ENCODE measurements at regions of chr12 and their contacts with region 1.

Region 1: GRCh38 chr12:79737875-79738718 is 47.3 kb upstream of the PAWR start:
- DNase-seq: no peak
- H3K4me3 ChIP-seq: no peak overlapping the region
- H3K27ac ChIP-seq: no peak overlapping the region
- H3K4me1 ChIP-seq: no peaks in the 10 kb centered on the region
- H3K27me3 ChIP-seq: no peaks in the 10 kb centered on the region
- CTCF ChIP-seq: peak; percentile 39 to 67 (median 40)

Region 2: GRCh38 chr12:79407671-79408622 is 330.1 kb before region 1 on chr12:
- intact Hi-C with region 1: loop called (anchors 2 kb)
- DNase-seq: peak in 1 of 2 donors; percentile 77
- H3K4me3 ChIP-seq: no peak overlapping the region
- H3K27ac ChIP-seq: peak overlapping the region; percentile 63 to 65
- H3K4me1 ChIP-seq: peaks cover 3 to 17% of the 10 kb centered on the region in 2 donors
- H3K27me3 ChIP-seq: no peaks in the 10 kb centered on the region
- CTCF ChIP-seq: peak; percentile 55 to 76 (median 57)

Region 3: DNA sequence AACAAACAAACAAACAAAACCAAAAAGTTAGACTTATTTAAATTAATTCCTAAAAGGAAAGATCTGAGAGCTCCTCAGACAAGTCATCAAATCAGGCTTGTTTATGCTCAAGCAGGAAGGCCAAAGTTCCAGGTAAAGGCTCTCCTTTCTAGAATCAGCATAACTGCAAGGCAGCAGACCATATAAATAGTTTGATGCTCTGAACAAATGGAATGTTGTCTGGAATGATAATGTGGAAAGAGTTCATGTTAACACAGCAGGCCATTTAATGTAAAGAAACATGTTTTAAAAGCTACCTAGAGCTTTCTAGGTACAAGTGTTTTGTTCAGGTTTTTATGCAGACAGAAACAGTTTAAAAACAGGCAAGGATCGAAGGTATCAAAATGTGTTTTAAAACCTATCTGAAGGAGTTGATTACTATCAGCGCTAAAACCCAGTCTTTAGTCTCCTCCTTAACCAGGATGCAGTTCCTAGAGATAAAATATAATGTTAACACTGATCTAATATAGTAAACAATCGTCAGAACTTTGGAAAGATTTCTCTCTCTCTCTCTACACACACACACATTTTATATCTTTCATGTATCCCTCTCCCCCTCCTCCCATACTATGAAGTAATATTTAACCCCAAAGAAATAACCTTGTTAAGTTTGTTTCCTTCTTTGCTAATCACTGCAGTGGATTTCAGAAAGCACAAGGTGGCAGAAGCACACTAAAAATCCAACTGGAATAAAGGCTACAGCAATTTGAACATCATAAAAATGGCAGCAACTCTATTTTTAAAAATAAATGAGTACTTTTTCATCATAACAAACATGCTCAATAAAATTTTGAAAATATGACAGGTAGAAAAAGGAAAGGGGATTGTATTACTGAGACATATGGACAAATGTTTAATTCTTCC is 182.8 kb before region 1 on chr12:
- intact Hi-C with region 1: loop called (anchors 2 kb)
- DNase-seq: no peak
- H3K4me3 ChIP-seq: no peak overlapping the region
- H3K27ac ChIP-seq: peak overlapping the region; percentile 67 to 76
- H3K4me1 ChIP-seq: peaks cover 3 to 59% of the 10 kb centered on the region in 2 donors
- H3K27me3 ChIP-seq: no peaks in the 10 kb centered on the region
- CTCF ChIP-seq: peak; percentile 38 to 70 (median 61)

Region 4: DNA sequence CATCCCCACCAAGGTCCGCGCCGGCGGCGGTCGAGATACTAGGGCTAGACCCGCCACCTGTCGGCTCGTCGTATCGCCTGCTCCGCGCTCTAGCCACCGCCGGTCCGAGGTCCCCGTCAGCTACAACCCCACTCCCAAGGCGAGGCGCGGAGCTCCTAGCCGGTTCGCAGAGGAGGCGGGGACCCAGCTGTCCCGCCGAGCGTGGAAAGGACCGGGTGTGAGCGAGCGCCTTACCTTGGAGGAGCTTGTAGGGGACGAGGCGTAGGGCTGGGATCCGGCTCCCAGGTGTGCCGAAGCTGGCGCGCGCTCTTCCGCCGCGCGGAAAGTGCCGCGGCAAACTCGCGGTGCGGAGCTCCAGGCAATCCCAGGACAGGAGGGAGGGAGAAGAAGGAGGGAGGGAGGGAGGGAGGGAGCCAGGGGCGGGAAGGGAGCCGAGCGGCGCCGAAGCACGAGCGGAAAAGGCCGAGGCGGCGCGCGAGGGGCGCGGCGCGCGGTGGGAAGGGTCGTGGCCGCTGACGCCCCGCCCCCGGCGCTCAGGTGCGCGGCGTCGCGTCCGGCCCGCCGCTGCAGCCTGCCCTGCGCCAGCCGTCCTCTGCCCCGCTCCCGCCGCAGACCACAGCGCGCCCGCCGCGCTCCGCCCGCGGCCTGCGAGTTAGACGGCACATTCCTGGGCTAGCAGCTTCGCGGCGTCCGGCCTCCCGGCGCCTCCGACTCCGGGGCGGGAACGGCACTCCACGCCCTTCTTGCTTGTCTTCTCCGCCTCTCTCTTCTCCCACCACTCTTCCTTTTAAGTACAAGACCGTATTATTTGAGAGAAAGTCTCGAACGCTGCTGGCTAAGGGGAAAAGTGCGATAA is 47.2 kb before region 1 on chr12 and contains the start of gene PAWR:
- intact Hi-C with region 1: loop called (anchors 5 kb)
- DNase-seq: peak in 1 of 2 donors; percentile 81
- H3K4me3 ChIP-seq: peak within 1 kb of the TSS; percentile 96 to 99
- H3K27ac ChIP-seq: peak within 1 kb of the TSS; percentile 93 to 99
- H3K4me1 ChIP-seq: peaks cover 0 to 7% of the 10 kb centered on the region in 2 donors
- H3K27me3 ChIP-seq: no peaks in the 10 kb centered on the region
- CTCF ChIP-seq: peak; percentile 2 to 44 (median 3)
- total RNA-seq, gene PAWR: 75.4 TPM

Region 5: GRCh38 chr12:79834712-79835376 is 96.7 kb after region 1 on chr12:
- intact Hi-C with region 1: no loop called
- DNase-seq: no peak
- H3K4me3 ChIP-seq: no peak overlapping the region
- H3K27ac ChIP-seq: no peak overlapping the region
- H3K4me1 ChIP-seq: peaks cover 3 to 22% of the 10 kb centered on the region in 2 donors
- H3K27me3 ChIP-seq: no peaks in the 10 kb centered on the region
- CTCF ChIP-seq: no peak

Measured in ascending aorta (tissue), 2 donors.